K562 (cell line): ENCODE measurements at regions of chr14 and their contacts with region 1.

Region 1: GRCh38 chr14:77760381-77761246 is at the start of gene SNW1:
- DNase-seq: peak; percentile 83 to 94 (median 86)
- ATAC-seq: peak; percentile 94
- H3K4me3 ChIP-seq: peak within 1 kb of the TSS; percentile 79
- H3K27ac ChIP-seq: peak within 1 kb of the TSS; percentile 89
- H3K4me1 ChIP-seq: peaks cover 3 to 4% of the 10 kb centered on the region in 2 experiments; a peak in 3 of 5 replicates
- H3K27me3 ChIP-seq: no peaks in the 10 kb centered on the region
- CTCF ChIP-seq: no peak
- EP300 ChIP-seq: no peak
- POLR2A ChIP-seq: peak; percentile 84
- RAD21 ChIP-seq: no peak
- polyA plus RNA-seq, gene SNW1: 79.0 to 143 TPM

Region 2: DNA sequence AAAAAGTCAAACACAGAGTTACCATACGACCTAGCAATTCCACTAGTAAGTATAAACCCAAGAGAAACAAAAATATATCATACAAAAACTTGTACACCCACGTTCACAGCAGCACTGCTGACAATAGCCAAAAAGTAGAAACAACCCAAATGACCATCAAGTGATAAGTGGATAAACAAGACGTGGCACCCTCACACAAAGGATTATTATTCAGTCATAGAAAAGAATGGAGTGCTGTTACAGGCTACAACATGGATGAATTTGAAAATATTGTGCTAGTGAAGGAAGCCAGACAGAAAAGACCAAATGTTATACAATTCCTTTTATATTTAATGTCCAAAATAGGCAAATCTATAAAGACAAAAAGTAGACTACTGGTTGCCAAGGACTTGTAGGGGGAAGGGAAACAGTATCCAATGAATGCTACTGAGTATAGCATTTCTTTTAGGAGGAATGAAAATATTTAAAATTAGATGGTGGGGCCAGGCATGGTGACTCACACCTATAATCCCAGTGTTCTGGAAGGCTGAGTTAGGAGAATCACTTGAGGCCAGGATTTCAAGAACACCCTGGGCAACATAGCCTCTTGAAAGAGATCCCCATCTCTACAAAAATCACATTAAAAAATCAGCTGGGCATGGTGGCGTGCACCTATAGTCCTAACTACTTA is 186.0 kb before region 1 on chr14:
- CTCF ChIA-PET with region 1: no interaction called
- POLR2A ChIA-PET with region 1: no interaction called
- in situ Hi-C with region 1: no loop called
- intact Hi-C with region 1: no loop called
- DNase-seq: no peak
- ATAC-seq: no peak
- H3K4me3 ChIP-seq: no peak overlapping the region
- H3K27ac ChIP-seq: no peak overlapping the region
- H3K4me1 ChIP-seq: no peaks in the 10 kb centered on the region; a peak in 1 of 5 replicates
- H3K27me3 ChIP-seq: no peaks in the 10 kb centered on the region
- CTCF ChIP-seq: no peak
- EP300 ChIP-seq: no peak
- POLR2A ChIP-seq: no peak
- RAD21 ChIP-seq: no peak

Region 3: DNA sequence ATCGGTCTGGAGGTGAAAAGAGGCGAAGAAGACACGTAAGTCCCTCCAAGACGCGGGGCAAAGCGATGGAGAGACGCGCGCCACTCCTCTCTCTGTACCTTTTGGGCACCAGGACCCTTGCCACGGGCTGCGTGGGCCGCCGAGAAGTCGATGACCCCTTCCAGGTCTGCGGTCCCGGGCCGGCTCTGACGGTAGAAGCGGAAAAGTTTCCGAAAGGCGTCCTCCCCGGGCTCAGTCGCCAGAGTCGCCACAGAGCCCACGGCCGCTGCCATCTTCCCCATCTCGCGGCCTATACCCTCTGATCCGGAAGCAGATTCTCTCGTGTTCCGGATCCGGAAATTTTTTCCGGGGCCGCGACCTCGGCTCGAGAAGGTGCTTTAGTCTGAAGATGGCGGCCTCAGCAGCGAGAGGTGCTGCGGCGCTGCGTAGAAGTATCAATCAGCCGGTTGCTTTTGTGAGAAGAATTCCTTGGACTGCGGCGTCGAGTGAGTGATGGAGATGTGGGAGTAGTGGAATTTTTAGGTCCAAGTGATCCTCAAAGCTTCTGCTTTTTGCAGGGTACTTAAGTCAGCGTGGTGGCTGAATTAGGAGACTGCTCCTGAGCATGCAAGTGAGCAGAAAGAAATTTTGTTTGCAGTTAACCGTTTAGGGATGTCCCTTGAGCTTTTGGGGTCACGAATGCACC is 52.7 kb before region 1 on chr14 and contains the starts of genes ALKBH1 and SLIRP:
- CTCF ChIA-PET with region 1: no interaction called
- POLR2A ChIA-PET with region 1: no interaction called
- in situ Hi-C with region 1: no loop called
- intact Hi-C with region 1: no loop called
- DNase-seq: peak; percentile 64 to 88 (median 74)
- ATAC-seq: peak; percentile 97
- H3K4me3 ChIP-seq: peak within 1 kb of the TSS; percentile 82
- H3K27ac ChIP-seq: peak within 1 kb of the TSS; percentile 87
- H3K4me1 ChIP-seq: peaks cover 0 to 6% of the 10 kb centered on the region in 2 experiments; a peak in 2 of 5 replicates
- H3K27me3 ChIP-seq: no peaks in the 10 kb centered on the region
- CTCF ChIP-seq: no peak
- EP300 ChIP-seq: no peak
- POLR2A ChIP-seq: peak; percentile 96
- RAD21 ChIP-seq: no peak
- polyA plus RNA-seq, gene ALKBH1: 5.3 to 9.1 TPM
- polyA plus RNA-seq, gene SLIRP: 1,478 to 1,905 TPM

Region 4: GRCh38 chr14:77799863-77800730 is 39.5 kb after region 1 on chr14 and contains the start of gene ADCK1:
- CTCF ChIA-PET with region 1: no interaction called
- POLR2A ChIA-PET with region 1: interaction called, 4 read pairs
- in situ Hi-C with region 1: loop called (anchors 5 kb)
- intact Hi-C with region 1: loop called (anchors 2 kb)
- DNase-seq: peak; percentile 79 to 90 (median 81)
- ATAC-seq: peak; percentile 96
- H3K4me3 ChIP-seq: peak within 1 kb of the TSS; percentile 71
- H3K27ac ChIP-seq: peak within 1 kb of the TSS; percentile 90
- H3K4me1 ChIP-seq: peaks cover 6 to 17% of the 10 kb centered on the region in 2 experiments; a peak in 4 of 5 replicates
- H3K27me3 ChIP-seq: no peaks in the 10 kb centered on the region
- CTCF ChIP-seq: peak in 1 of 3 experiments; percentile 24; a peak in 1 of 6 replicates
- EP300 ChIP-seq: no peak
- POLR2A ChIP-seq: peak; percentile 80
- RAD21 ChIP-seq: no peak
- polyA plus RNA-seq, gene ADCK1: 3.6 to 4.3 TPM